ENCODE measurements at regions of chr10 and their contacts with region 1.

Region 1: DNA sequence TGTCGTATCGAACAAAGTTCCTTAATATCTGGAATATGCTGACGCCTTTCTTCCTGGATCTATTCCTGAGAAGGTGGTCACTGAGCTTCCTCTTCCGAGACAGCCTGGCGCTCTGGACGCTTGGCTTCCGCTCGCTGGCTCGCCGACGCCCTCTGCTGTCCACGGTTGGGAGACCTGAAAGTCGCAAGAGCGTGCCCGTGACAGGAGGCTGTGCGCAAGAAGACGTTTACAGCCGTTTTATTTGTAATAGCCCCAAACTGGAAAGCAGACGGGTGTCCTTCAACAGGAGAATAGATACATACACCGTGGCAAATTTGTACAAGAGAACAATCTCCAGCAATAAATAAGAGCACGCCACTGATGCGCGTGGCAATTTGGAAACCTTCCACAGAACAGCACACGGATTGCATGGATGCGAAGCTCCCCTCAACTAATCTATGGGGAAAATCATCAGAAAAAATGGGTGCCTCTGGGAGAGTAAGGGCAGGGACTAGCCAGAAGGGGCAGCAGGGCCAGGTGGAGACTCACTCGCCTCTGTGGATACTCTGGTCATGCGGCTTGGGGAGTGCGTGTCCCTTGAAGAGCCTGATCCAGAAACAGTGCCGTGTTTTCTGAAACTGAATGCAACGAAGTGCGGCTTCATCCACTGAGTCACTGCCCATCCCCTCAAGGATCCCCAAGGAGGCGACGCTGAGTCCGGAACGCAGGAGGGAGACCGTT is 41.5 kb upstream of the BNIP3 start:
- DNase-seq: peak; percentile 72
- ATAC-seq: peak; percentile 98
- H3K4me3 ChIP-seq: 0 out of 2 replicates have a peak overlapping the region, but pooled peaks have one; percentile 2
- H3K27ac ChIP-seq: no peak overlapping the region
- H3K4me1 ChIP-seq: no peaks in the 10 kb centered on the region
- H3K27me3 ChIP-seq: peaks cover 29% of the 10 kb centered on the region
- CTCF ChIP-seq: peak; percentile 94
- POLR2A ChIP-seq: no peak
- RAD21 ChIP-seq: peak; percentile 95

Region 2: DNA sequence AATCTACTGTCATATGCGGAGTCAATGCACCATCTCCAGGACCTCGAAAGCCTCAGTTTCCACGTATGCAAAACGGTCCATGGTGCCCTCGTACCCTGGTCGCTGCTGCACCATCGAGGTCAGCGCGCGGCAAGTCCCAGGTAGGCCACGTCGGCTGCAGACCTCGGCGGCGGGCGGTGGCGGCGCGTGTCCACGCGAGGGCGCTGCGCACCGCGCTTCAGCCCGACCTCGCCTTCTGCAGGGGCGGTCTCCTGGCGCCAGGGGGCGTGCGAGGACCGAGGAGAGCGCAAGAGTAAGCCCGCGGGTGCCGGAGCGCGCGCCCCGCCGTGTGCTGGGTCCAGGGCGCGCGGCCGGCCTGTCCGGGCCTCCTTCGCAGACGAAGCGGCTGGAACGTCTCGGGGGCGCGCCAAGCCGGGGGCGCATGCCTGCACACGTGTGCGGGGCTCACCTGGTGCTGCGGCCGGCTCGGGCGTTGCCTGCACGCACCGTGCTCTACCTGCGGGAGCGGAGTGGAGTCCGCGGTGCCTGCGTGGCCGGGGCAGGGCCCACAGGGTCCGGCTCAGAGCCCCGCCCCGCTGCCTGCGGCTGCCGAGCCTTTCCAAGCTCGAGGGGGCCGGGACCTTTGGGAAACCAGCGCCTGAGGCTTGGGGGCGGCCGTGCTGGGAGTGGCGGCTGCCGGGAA is 1833.1 kb before region 1 on chr10:
- CTCF ChIA-PET with region 1: no interaction called
- POLR2A ChIA-PET with region 1: no interaction called
- dilution Hi-C with region 1: no loop called
- in situ Hi-C with region 1: loop called (anchors 25 kb)
- intact Hi-C with region 1: no loop called
- DNase-seq: peak; percentile 75
- ATAC-seq: peak; percentile 96
- H3K4me3 ChIP-seq: peak overlapping the region; percentile 61
- H3K27ac ChIP-seq: no peak overlapping the region; the same call in 1 of the 2 replicates
- H3K4me1 ChIP-seq: 0 out of 2 replicates have a peak, but pooled peaks cover 1% of the 10 kb centered on the region
- H3K27me3 ChIP-seq: no peaks in the 10 kb centered on the region
- CTCF ChIP-seq: peak; percentile 100; the same call in 1 of the 2 replicates
- POLR2A ChIP-seq: no peak
- RAD21 ChIP-seq: peak; percentile 92

Region 3: GRCh38 chr10:131748831-131749766 is 274.2 kb before region 1 on chr10:
- CTCF ChIA-PET with region 1: no interaction called
- POLR2A ChIA-PET with region 1: no interaction called
- dilution Hi-C with region 1: no loop called
- in situ Hi-C with region 1: no loop called
- intact Hi-C with region 1: no loop called
- DNase-seq: no peak
- ATAC-seq: no peak
- H3K4me3 ChIP-seq: no peak overlapping the region
- H3K27ac ChIP-seq: no peak overlapping the region
- H3K4me1 ChIP-seq: no peaks in the 10 kb centered on the region
- H3K27me3 ChIP-seq: no peaks in the 10 kb centered on the region
- CTCF ChIP-seq: no peak
- POLR2A ChIP-seq: no peak
- RAD21 ChIP-seq: no peak

Region 4: DNA sequence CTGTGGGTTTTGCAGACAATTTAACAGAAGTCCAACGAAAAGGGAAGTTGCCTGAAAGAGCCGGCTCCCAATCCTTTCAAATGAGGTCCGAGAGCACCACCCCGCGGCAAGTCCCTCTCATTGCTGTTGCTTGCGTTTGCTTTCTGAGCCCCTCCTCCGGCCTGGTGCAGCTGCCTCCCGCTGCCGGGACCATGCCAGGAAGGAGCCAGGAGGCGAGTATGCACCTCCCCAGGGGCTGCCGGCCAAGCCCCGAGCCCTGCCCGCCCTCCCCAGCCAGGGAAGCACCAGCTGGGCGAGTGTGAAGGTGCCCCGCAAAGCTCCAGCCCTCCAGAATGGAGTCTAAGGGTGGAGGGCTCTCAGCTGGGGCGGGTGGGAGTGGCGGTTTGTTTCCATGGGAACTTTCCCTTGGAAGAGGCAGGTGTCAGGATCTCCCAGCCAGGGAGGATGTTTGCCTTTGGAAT is 148.2 kb before region 1 on chr10:
- CTCF ChIA-PET with region 1: no interaction called
- POLR2A ChIA-PET with region 1: no interaction called
- dilution Hi-C with region 1: no loop called
- in situ Hi-C with region 1: no loop called
- intact Hi-C with region 1: no loop called
- DNase-seq: peak; percentile 72
- ATAC-seq: peak; percentile 99
- H3K4me3 ChIP-seq: no peak overlapping the region
- H3K27ac ChIP-seq: no peak overlapping the region
- H3K4me1 ChIP-seq: no peaks in the 10 kb centered on the region
- H3K27me3 ChIP-seq: peaks cover 7% of the 10 kb centered on the region; the same call in 1 of the 2 replicates
- CTCF ChIP-seq: peak; percentile 87
- POLR2A ChIP-seq: no peak
- RAD21 ChIP-seq: peak; percentile 85

Region 5: DNA sequence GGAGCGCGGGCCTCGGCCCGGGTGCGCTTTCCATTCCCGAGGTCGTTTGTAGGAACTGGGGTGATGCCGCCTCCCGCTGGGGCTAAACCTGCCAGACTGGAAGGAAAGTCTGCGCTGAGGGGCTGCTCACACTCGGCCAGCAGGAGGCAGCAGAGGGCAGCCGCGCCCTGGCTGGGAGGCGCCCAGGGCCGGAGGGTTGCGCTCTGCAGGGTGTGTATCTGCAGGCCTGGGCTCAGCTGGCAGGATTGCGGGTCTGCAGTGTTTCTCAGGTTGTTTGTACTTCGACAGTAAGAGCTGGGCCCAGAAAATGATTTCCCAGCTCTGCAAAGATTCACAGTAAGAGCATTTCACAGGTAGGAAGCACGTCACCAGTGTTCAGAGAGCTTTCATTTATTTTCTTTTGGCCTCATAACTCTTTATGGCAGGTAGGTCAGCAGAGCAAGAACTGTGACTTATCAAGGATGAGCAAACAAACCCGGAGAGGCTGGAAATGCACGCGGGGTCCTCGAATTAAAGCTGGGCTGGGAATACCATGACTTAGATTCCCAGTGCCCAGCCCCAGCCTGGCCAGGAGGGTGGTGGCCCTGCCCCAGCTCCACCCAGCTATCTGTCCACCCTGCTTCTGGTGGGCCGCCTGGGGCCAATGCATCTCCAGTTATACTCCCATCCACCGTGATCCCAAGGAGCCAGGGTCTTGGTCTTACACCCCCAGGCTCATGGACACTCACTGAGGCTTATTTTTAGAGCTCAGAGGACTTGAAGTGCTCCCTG is 137.7 kb before region 1 on chr10:
- CTCF ChIA-PET with region 1: interaction called, 29 read pairs
- POLR2A ChIA-PET with region 1: no interaction called
- dilution Hi-C with region 1: no loop called
- in situ Hi-C with region 1: loop called (anchors 5 kb)
- intact Hi-C with region 1: loop called (anchors 1 kb)
- DNase-seq: peak; percentile 39
- ATAC-seq: peak; percentile 100
- H3K4me3 ChIP-seq: no peak overlapping the region
- H3K27ac ChIP-seq: no peak overlapping the region
- H3K4me1 ChIP-seq: no peaks in the 10 kb centered on the region
- H3K27me3 ChIP-seq: peaks cover 9% of the 10 kb centered on the region; the same call in 1 of the 2 replicates
- CTCF ChIP-seq: peak; percentile 95
- POLR2A ChIP-seq: no peak
- RAD21 ChIP-seq: peak; percentile 94

Region 6: GRCh38 chr10:131900350-131901146 is 122.7 kb before region 1 on chr10 and contains the start of gene PPP2R2D:
- CTCF ChIA-PET with region 1: interaction called, 4 read pairs
- POLR2A ChIA-PET with region 1: no interaction called
- dilution Hi-C with region 1: no loop called
- in situ Hi-C with region 1: no loop called
- intact Hi-C with region 1: loop called (anchors 5 kb)
- DNase-seq: peak; percentile 83
- ATAC-seq: peak; percentile 95
- H3K4me3 ChIP-seq: peak within 1 kb of the TSS; percentile 65
- H3K27ac ChIP-seq: peak within 1 kb of the TSS; percentile 76
- H3K4me1 ChIP-seq: peaks cover 10% of the 10 kb centered on the region
- H3K27me3 ChIP-seq: peaks cover 25% of the 10 kb centered on the region
- CTCF ChIP-seq: no peak
- POLR2A ChIP-seq: no peak
- RAD21 ChIP-seq: no peak
- total RNA-seq, gene PPP2R2D: 21.1 and 23.8 TPM in 2 replicates

Region 7: DNA sequence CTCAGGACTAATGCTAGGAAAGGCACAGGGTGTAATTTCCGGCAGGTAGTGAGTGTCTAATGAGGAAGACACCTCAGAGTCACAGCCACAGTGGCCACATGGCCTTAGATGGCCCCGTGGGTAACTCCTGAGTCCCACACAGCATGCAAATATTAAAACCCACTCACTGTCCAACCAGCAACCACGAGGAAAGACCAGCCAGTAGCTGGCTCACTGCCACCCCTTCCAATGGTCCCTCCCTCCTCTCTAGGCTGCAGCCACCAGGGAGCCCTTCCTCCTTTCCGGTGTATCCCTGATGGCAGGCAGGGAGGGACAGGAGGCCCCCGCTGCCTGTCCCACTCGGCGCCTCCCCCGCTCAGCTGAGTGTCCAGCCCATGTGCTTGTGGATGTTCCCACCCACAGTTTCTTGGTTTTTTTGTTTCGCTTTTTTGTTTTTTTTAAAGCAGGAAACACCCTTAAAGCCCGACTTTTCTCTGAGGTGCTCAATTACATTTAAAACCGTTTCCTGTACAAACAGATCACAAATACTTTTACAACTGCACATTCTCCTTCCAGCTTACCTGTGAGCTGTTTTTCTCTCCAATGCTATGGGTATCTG is 50.7 kb before region 1 on chr10:
- CTCF ChIA-PET with region 1: interaction called, 13 read pairs
- POLR2A ChIA-PET with region 1: no interaction called
- dilution Hi-C with region 1: no loop called
- in situ Hi-C with region 1: no loop called
- intact Hi-C with region 1: loop called (anchors 2 kb)
- DNase-seq: peak; percentile 36
- ATAC-seq: peak; percentile 65
- H3K4me3 ChIP-seq: no peak overlapping the region
- H3K27ac ChIP-seq: no peak overlapping the region
- H3K4me1 ChIP-seq: peaks cover 17% of the 10 kb centered on the region
- H3K27me3 ChIP-seq: no peaks in the 10 kb centered on the region
- CTCF ChIP-seq: no peak
- POLR2A ChIP-seq: no peak
- RAD21 ChIP-seq: no peak

Region 8: DNA sequence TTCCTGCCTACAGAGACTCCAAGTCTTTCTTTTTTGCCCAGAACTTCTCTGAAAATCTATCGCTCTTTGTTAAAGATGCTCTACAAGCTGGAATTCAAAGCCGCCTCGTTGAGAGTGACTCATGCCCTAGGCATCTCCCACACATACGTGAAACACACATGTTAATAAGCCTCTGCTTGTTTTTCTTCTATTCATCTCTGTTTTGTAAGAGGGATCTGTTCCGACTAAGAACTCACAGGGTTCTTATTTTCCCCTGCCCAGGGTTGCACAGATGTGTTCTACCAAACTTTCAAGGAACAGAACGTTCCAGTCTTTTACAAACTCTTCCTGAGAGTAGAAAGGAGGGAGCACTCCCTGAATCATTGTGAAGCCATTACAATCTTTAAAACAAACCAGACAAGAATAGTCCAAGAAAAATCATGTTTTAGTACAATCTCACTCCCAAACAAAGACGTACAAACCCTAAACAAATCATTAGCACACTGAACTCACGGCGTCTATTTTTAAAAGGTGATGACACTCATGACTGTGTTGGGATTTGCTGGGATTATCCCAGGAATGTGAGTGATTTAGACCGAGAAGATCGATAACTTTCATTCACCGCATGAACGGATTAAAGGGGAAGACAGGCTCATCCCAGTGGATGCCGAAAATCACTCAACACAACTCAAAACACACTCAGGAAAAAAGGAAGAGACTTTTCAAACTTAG is 459.0 kb after region 1 on chr10:
- CTCF ChIA-PET with region 1: no interaction called
- POLR2A ChIA-PET with region 1: no interaction called
- dilution Hi-C with region 1: no loop called
- in situ Hi-C with region 1: no loop called
- intact Hi-C with region 1: no loop called
- DNase-seq: peak; percentile 91
- ATAC-seq: peak; percentile 85
- H3K4me3 ChIP-seq: no peak overlapping the region
- H3K27ac ChIP-seq: peak overlapping the region; percentile 13; the same call in 1 of the 2 replicates
- H3K4me1 ChIP-seq: peaks cover 7% of the 10 kb centered on the region
- H3K27me3 ChIP-seq: no peaks in the 10 kb centered on the region; the same call in 1 of the 2 replicates
- CTCF ChIP-seq: no peak
- POLR2A ChIP-seq: no peak
- RAD21 ChIP-seq: no peak

Measured in IMR-90 (cell line).